ENCODE measurements at regions of chr10 and their contacts with region 1.

Region 1: GRCh38 chr10:69506834-69507721 is 55.8 kb downstream of the TSPAN15 start:
- DNase-seq: no peak
- ATAC-seq: peak; percentile 48
- H3K4me3 ChIP-seq: no peak overlapping the region
- H3K27ac ChIP-seq: no peak overlapping the region
- H3K4me1 ChIP-seq: no peaks in the 10 kb centered on the region
- H3K27me3 ChIP-seq: no peaks in the 10 kb centered on the region

Region 2: DNA sequence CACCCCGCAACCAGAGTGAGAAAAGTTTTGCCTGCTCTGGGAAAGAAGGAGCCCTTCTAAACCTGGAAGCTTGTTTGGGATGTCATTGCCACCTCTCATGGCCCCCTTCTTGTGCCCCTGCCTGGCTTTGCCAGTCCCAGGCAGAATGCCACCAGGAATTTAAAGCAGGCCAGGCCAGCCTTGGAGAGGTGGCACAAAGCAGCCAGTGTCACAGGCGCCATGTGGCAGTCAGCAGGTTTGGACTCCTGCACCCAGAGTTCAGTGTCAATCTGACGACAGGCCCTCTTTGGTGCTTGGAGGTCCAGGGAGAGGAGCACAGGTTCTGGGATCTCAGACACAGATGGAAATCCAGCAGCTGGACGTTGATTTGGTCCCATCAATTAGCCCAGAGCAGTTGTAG is 216.1 kb before region 1 on chr10:
- intact Hi-C with region 1: no loop called
- DNase-seq: no peak
- ATAC-seq: no peak
- H3K4me3 ChIP-seq: no peak overlapping the region
- H3K27ac ChIP-seq: no peak overlapping the region
- H3K4me1 ChIP-seq: no peaks in the 10 kb centered on the region
- H3K27me3 ChIP-seq: no peaks in the 10 kb centered on the region

Region 3: DNA sequence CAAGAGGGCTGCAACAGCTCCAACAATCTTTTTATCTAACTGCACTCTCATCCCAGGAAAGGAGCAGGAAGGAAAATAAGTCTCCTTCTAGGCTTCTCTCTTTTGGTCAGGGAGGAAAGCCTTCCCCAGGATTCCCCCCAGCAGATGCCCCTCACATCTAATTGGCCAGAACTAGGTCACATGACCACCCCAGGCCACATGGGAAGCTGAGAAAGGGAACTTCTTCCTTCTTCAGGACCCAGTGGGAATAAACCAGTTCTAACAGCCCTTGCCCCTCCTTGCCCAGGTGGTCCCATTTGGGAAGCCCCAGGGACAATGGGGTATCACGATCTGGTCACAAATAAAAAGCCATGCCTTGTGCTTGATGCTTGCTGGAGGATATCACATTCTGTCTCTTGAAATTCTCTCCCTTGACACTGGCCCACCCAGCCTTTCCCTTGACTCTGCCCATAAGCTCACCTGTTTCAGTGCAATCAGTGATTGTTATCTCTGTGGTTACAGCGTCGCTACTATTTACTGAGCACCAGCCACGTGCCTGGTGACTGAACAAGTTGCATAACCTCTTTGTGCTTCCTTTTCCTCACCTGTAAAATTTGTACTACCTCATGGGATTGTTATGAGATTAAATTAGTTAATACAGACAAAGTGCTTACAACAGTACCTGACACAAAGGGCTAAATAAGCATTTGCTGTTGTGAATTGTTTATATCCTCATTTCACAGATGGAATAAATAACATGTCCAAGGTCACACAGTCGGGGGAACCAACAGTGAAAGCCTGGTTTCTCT is 81.4 kb before region 1 on chr10:
- intact Hi-C with region 1: loop called (anchors 1 to 2 kb)
- DNase-seq: no peak
- ATAC-seq: no peak
- H3K4me3 ChIP-seq: no peak overlapping the region
- H3K27ac ChIP-seq: no peak overlapping the region
- H3K4me1 ChIP-seq: no peaks in the 10 kb centered on the region
- H3K27me3 ChIP-seq: no peaks in the 10 kb centered on the region

Measured in aorta (tissue), 5 donors.